ENCODE measurements at regions of chr6 and their contacts with region 1.

Region 1: GRCh38 chr6:137791281-137792159 is 75.5 kb upstream of the TNFAIP3 start:
- DNase-seq: no peak
- H3K4me3 Mint-ChIP-seq: peak overlapping the region; percentile 37
- H3K27ac Mint-ChIP-seq: peak overlapping the region; percentile 81
- H3K4me1 Mint-ChIP-seq: peaks cover 61% of the 10 kb centered on the region
- H3K27me3 Mint-ChIP-seq: no peaks in the 10 kb centered on the region

Region 2: GRCh38 chr6:137717074-137718073 is 74.1 kb before region 1 on chr6:
- intact Hi-C with region 1: loop called (anchors 1 kb)
- DNase-seq: peak; percentile 76
- H3K4me3 Mint-ChIP-seq: peak overlapping the region; percentile 6
- H3K27ac Mint-ChIP-seq: peak overlapping the region; percentile 94
- H3K4me1 Mint-ChIP-seq: peaks cover 65% of the 10 kb centered on the region
- H3K27me3 Mint-ChIP-seq: no peaks in the 10 kb centered on the region

Region 3: DNA sequence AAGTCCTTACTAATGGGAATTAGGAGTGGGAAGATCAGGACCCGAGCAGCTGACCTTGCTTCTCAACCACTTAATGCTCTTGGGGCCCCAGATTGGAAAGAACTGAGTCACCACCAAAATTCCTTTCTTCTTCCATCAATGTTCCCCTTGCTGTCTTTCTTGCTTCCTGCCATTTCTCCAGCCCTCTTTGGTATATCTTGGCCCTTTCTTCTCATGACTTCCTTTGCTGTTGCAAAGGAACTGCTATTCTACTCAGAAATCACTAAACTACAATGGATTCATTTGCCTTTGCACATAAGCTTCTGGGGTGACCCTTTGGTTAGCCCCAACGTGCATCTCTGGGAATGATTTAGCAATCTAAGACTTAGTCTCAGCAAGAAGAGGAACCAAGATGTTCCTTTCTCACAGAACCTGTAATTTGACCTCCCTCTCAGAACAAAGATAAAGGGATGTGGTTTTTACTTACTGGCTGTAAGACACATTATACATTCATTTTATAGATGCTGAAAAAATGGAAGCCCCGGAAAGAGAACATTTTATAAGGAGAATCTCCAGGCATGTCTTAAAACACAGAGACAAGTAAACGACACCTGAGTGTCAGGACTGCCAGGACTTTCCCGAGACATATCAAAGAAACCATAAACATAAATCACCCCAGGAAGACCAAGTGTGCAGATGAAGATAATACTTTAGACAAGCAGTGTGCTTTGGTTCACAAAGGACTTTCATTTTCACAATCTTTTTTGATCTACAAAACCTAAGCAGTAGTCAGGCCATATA is 23.4 kb before region 1 on chr6:
- intact Hi-C with region 1: loop called (anchors 1 kb)
- DNase-seq: no peak
- H3K4me3 Mint-ChIP-seq: peak overlapping the region; percentile 54
- H3K27ac Mint-ChIP-seq: peak overlapping the region; percentile 94
- H3K4me1 Mint-ChIP-seq: peaks cover 29% of the 10 kb centered on the region
- H3K27me3 Mint-ChIP-seq: no peaks in the 10 kb centered on the region

Region 4: DNA sequence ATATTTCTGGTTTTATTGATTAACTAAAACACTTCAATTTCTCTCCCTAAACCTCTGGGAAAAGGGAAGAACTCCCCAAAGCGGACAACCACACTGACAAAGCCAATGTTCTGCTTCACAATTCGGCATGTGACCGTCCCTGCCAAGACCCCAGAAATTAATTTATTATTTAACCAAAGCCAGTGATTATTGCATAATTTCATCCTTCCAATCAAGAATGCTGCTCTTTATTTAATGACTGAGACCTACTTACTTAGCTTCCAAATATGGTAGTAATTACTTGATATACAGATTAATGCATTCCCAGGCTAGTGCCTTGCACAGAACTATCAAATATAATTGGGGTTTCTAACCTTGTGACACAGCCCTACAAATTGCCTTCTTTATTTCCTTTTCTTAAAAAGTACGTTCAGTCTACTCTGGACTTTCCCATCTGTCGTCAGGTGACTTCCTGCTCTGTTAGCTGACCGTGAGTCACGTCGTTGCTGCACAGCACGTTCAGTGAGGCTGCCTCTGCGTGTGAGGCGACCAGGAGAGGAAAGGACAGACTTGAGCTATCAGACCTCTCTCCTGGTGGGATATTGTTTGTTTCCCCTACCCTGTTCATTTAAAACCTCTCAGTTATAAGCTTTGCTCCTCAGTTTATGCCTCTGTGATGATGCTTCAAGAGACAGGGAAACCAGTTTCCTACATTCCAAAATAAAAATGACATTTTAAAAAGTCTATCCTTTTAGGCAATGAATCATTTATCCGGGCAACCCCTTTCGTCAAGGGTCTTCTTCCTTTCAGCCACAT is 19.8 kb after region 1 on chr6:
- intact Hi-C with region 1: loop called (anchors 2 kb)
- DNase-seq: peak; percentile 69
- H3K4me3 Mint-ChIP-seq: peak overlapping the region; percentile 7
- H3K27ac Mint-ChIP-seq: peak overlapping the region; percentile 90
- H3K4me1 Mint-ChIP-seq: peaks cover 59% of the 10 kb centered on the region
- H3K27me3 Mint-ChIP-seq: no peaks in the 10 kb centered on the region

Region 5: GRCh38 chr6:137823826-137824555 is 32.5 kb after region 1 on chr6:
- intact Hi-C with region 1: loop called (anchors 1 kb)
- DNase-seq: peak; percentile 70
- H3K4me3 Mint-ChIP-seq: peak overlapping the region; percentile 81
- H3K27ac Mint-ChIP-seq: peak overlapping the region; percentile 96
- H3K4me1 Mint-ChIP-seq: peaks cover 80% of the 10 kb centered on the region
- H3K27me3 Mint-ChIP-seq: no peaks in the 10 kb centered on the region

Region 6: GRCh38 chr6:137975188-137975940 is 183.8 kb after region 1 on chr6:
- intact Hi-C with region 1: loop called (anchors 2 kb)
- DNase-seq: peak; percentile 26
- H3K4me3 Mint-ChIP-seq: peak overlapping the region; percentile 72
- H3K27ac Mint-ChIP-seq: peak overlapping the region; percentile 93
- H3K4me1 Mint-ChIP-seq: peaks cover 57% of the 10 kb centered on the region
- H3K27me3 Mint-ChIP-seq: no peaks in the 10 kb centered on the region

Measured in activated T-helper 2 cell treated with anti-CD3 and anti-CD28 coated beads, Interferon-gamma antibody, Interleukin-2, Interleukin-4, amounts not matched to agents 10 μg/mL and 5 μg/mL and 100 μg/mL, durations not matched to agents 14 hours and 24 hours and 36 hours (primary cell).